ENCODE measurements at regions of chr14 and their contacts with region 1.

Region 1: DNA sequence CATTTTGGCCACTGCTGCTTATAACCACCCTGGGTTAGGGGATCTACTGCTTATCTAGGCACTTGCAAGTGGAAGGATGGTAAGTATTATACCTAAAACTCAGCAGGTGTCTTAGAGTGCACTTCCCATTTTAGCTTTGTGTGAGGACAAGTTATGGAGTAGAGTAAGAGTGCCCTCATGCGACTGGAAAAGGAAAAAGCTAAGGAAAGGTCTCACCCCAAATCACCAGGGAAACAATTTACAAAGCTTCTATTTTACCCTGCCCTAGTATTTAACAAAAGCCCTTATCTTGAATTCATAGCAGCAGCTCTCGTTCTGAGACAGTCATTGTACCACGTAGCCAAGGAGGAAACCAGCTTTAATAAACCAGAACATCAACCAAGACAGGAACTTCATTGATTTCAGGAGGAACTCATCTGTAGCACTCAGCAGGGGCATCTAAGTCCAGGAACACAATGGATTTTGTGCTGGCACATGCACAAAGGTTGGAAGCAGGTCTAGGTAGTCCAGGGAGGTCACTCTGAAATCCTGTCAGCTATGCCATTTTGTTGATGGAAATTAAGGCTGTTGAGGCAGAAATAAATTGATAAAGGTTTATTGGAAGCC is 2.9 kb downstream of the RDH12 start:
- DNase-seq: no peak
- ATAC-seq: peak; percentile 76 to 86
- H3K4me3 ChIP-seq: no peak overlapping the region
- H3K27ac ChIP-seq: no peak overlapping the region
- H3K4me1 ChIP-seq: no peaks in the 10 kb centered on the region
- H3K27me3 ChIP-seq: no peaks in the 10 kb centered on the region

Region 2: DNA sequence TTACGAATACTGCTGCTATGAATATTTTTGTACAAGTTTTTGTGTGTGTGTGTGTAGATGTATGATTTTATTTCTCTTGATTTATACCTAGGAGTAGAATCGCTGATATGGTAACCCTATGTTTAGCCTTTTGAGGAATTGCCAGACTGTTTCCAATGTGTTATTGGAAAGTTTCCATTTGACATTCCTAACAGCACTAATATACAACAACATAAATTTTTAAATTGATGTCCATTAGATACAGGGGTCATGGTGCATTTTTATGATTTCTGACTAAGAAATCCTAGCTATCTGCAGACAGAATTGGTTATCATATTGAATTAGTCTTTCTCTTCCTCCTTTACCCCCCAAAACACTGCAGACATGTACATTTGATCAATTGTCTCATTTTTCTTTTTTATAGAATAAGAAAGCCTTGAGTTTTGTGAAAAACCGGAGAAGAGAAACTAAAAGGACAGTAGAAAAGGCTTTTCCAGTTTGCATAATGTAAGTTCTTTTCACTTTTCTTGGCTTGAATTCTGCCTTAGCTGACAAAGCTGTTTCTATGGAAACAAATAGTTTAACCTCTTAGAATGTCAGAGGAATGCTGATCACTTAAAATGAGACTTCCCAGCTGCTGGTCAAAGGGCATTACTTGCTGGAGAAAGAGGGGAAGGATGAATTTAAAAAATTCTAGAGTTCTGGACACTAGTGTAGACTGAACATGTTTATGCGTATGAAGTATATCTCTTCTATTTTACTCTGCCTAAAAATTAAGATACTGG is 435.1 kb before region 1 on chr14:
- intact Hi-C with region 1: no loop called
- DNase-seq: no peak
- ATAC-seq: peak; percentile 67 to 79
- H3K4me3 ChIP-seq: peak overlapping the region; percentile 38
- H3K27ac ChIP-seq: no peak overlapping the region
- H3K4me1 ChIP-seq: peaks cover 8% of the 10 kb centered on the region
- H3K27me3 ChIP-seq: no peaks in the 10 kb centered on the region

Region 3: GRCh38 chr14:67435615-67436346 is 268.8 kb before region 1 on chr14:
- intact Hi-C with region 1: loop called in 1 of 4 experiments (anchors 10 kb)
- DNase-seq: no peak
- ATAC-seq: peak in 1 of 2 donors; percentile 36
- H3K4me3 ChIP-seq: no peak overlapping the region
- H3K27ac ChIP-seq: no peak overlapping the region
- H3K4me1 ChIP-seq: no peaks in the 10 kb centered on the region
- H3K27me3 ChIP-seq: no peaks in the 10 kb centered on the region

Region 4: GRCh38 chr14:67583711-67584644 is 120.6 kb before region 1 on chr14:
- intact Hi-C with region 1: loop called in 3 of 4 experiments (anchors 10 kb)
- DNase-seq: no peak
- ATAC-seq: peak; percentile 75 to 80
- H3K4me3 ChIP-seq: no peak overlapping the region
- H3K27ac ChIP-seq: no peak overlapping the region
- H3K4me1 ChIP-seq: no peaks in the 10 kb centered on the region
- H3K27me3 ChIP-seq: no peaks in the 10 kb centered on the region

Region 5: DNA sequence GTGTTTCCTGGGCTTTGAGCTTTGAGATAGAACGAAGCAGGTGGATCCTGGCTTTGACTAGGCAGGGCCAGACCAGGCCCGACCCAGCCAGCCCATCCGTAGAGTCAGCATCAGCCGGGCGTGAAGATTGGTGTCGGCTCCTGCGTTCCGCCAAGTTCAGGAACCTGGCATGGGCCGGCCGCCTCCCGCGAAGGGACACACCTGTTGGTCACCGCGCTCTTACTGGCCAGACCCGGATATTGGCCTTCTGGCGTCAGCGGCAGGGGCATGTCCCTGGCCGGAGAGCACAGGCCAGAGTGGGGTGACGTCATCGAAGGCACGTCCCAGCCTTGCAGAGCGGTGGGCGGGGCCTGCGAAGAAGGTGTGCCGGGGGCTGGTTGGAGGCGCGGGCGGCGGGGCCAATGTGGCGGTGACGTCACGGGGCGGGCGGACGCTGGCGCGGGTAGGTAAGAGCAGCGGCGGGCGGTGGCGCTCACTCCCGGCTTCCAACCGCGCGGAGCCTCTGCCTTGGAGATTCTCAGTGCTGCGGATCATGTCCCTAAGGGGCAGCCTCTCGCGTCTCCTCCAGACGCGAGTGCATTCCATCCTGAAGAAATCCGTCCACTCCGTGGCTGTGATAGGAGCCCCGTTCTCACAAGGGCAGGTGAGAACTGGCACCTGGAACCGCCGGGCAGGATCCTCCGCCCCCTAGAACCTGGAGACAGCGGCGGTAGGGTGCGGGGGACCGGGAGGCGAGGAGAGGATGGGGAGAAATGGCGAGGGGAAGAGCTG is 85.0 kb before region 1 on chr14 and contains the start of gene ARG2:
- intact Hi-C with region 1: loop called in 2 of 4 experiments (anchors 2 to 10 kb)
- DNase-seq: peak; percentile 98 to 99 (median 98)
- ATAC-seq: peak; percentile 99
- H3K4me3 ChIP-seq: peak within 1 kb of the TSS; percentile 34
- H3K27ac ChIP-seq: no peak within 1 kb of the TSS
- H3K4me1 ChIP-seq: no peaks in the 10 kb centered on the region
- H3K27me3 ChIP-seq: no peaks in the 10 kb centered on the region
- total RNA-seq, gene ARG2: 0.25 to 0.68 (median 0.51) TPM